Ascending aorta (tissue), 2 donors: ENCODE measurements at regions of chr3 and their contacts with region 1.

Region 1: DNA sequence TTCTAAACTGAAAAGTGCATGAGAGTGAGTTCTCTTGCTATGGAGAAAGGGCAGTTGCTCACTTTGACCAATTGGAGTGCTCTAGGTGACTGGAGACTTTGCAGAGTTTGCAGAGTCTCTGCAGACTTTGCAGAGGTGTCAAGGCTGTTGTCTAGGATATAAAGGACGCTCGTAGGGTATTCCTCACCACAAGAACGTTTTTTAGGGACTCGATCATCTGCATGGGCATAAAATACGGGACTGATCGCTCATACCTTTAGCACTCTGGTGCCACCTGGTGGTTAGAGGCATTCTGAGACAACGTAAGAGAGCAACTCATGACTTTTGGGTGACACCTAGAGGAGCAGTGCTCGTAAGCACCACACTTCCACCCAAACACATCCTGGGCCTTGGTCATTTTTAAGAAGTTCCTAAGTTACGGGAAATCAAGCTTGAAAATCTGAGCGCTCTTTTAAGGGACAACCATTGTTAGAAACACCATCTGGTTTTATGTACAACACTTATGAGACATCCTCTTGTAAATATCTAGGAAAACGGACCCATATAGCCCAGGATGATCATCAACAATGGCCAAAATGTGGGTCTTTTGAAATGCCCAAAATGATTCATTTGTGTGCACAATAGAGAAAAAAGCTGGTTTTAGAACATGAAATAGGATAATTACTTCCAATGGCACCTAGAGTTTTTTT is 51.6 kb upstream of the XCR1 start:
- DNase-seq: peak; percentile 53 to 97
- H3K4me3 ChIP-seq: peak overlapping the region in 1 of 2 donors; percentile 45
- H3K27ac ChIP-seq: no peak overlapping the region
- H3K4me1 ChIP-seq: no peaks in the 10 kb centered on the region
- H3K27me3 ChIP-seq: no peaks in the 10 kb centered on the region
- CTCF ChIP-seq: peak; percentile 96 to 99 (median 97)

Region 2: DNA sequence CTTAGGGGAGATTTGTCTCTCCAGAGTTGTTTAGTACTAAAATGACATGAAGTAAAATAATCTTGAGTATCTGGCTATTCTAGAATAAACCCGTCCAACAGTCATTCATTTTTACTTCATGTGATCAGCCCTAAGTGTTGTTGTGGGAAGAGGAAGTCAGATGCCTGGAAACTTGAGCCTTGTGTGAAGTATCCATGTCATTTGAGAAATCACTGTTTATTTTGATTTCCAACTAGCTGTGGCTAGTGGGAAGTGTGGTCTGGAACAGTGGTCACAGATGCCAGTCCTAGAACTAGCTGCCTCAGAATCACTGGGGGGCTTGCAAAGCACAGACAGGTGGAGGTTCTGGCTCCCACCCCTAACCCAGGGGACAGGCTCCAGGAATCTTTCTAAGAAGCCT is 562.0 kb before region 1 on chr3:
- intact Hi-C with region 1: loop called (anchors 10 kb)
- DNase-seq: no peak
- H3K4me3 ChIP-seq: no peak overlapping the region
- H3K27ac ChIP-seq: no peak overlapping the region
- H3K4me1 ChIP-seq: no peaks in the 10 kb centered on the region
- H3K27me3 ChIP-seq: no peaks in the 10 kb centered on the region
- CTCF ChIP-seq: no peak

Region 3: DNA sequence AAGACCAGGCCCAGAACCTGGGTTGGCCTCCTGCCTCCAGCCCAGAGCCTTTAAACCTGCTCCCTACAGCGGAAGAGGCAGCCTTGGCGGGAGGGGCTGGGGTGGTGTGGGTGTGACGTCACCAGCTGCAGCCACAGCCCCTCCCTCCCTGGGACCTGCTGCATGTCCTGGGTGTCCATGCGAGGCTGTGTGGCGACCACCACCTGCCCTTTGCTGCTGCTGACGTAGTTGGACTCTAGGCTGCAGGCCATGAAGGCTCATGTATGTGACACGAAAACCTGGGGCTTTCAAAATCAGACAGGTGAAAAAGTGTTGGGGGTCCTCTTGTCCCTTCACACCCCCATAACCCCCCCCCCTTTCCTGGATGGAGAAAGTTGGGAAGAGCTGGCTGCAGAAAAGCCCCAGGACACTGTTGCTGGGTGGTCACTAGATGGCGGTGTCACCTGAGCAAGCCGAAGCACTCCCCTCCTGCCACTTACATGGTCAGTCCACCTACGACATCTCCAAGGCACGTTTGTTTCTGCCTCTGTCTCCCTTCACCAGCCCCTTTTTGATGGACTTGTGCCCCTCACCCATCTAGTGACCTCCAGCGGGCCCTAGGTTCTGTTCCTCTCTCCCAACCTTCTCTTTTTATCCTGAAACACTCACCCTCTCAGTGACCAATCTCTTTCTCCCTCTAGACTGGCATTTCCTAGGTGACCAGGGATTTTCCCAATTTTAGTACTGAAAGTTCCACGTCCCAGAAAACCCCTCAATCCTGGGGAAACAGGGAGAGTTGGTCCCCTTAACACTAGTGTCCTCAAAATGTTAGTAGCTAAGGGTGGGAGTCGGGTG is 317.8 kb before region 1 on chr3:
- intact Hi-C with region 1: loop called (anchors 5 kb)
- DNase-seq: peak in 1 of 2 donors; percentile 63
- H3K4me3 ChIP-seq: no peak overlapping the region
- H3K27ac ChIP-seq: no peak overlapping the region
- H3K4me1 ChIP-seq: no peaks in the 10 kb centered on the region
- H3K27me3 ChIP-seq: no peaks in the 10 kb centered on the region
- CTCF ChIP-seq: peak; percentile 46 to 63 (median 51)

Region 4: DNA sequence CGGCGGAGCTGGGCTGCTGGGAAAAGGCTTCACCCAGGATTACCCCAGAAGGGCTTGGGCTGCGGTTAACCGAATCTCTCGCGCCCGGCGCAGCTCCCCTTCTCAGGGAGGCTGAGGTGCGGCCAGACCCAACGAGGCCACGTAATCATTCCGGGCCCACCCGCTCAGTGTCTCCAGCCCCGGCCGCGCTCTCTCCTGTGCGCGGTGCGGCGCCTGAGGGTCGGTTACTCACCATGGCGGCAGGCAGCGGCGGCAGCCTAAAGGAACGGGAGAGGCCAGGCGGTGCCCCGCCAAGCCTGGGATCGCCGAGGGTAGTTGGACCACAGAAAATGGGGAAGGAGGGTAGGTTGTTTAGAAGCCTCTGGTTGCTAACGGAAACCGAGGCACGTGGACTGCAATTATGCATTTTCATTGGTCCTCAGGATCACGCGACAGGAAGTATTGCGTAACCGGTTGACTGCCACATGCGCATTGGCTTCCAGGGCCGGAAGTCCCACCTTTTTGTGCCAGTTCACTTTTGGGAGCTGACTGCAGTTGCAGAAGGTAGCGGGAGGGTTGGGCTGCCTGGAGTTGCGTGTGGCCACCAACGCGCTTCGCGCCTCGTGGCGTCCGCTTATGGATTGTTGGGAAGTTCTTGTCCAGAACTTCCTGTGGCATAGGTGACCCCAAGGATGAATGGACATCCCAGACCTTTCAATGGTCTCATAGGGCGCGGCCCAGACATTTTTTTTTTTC is 236.9 kb before region 1 on chr3 and contains the start of gene LZTFL1:
- intact Hi-C with region 1: loop called (anchors 5 kb)
- DNase-seq: peak; percentile 78 to 96
- H3K4me3 ChIP-seq: peak within 1 kb of the TSS; percentile 72 to 79
- H3K27ac ChIP-seq: peak within 1 kb of the TSS in 1 of 2 donors; percentile 16
- H3K4me1 ChIP-seq: no peaks in the 10 kb centered on the region
- H3K27me3 ChIP-seq: no peaks in the 10 kb centered on the region
- CTCF ChIP-seq: no peak
- total RNA-seq, gene LZTFL1: 6.7 TPM

Region 5: GRCh38 chr3:45938864-45939263 is 140.0 kb before region 1 on chr3:
- intact Hi-C with region 1: loop called (anchors 1 kb)
- DNase-seq: peak; percentile 51 to 93
- H3K4me3 ChIP-seq: no peak overlapping the region
- H3K27ac ChIP-seq: no peak overlapping the region
- H3K4me1 ChIP-seq: peaks cover 0 to 3% of the 10 kb centered on the region in 2 donors
- H3K27me3 ChIP-seq: no peaks in the 10 kb centered on the region
- CTCF ChIP-seq: peak; percentile 77 to 89 (median 83)

Region 6: DNA sequence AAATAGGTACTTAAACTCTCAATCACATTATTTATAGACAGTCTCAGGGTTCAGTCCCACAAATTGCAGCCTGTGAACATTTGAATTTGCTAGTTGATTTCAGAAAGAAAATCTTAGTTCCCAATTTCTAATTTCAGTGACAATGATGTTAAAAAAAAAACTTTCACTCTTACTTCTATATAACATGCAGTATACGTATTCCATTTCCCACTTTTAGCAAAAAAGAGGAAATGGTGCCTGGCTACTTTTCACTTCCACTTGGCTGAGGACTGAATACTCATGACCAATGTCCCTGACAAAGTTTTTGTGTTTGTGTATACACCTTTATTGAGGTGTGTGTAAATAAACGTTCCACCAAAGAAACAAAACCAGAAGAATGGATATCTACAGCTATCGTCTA is 19.4 kb before region 1 on chr3:
- intact Hi-C with region 1: loop called (anchors 2 kb)
- DNase-seq: no peak
- H3K4me3 ChIP-seq: no peak overlapping the region
- H3K27ac ChIP-seq: no peak overlapping the region
- H3K4me1 ChIP-seq: peaks cover 3 to 24% of the 10 kb centered on the region in 2 donors
- H3K27me3 ChIP-seq: no peaks in the 10 kb centered on the region
- CTCF ChIP-seq: no peak

Region 7: GRCh38 chr3:46143951-46144473 is 65.2 kb after region 1 on chr3:
- intact Hi-C with region 1: no loop called
- DNase-seq: no peak
- H3K4me3 ChIP-seq: no peak overlapping the region
- H3K27ac ChIP-seq: no peak overlapping the region
- H3K4me1 ChIP-seq: no peaks in the 10 kb centered on the region
- H3K27me3 ChIP-seq: no peaks in the 10 kb centered on the region
- CTCF ChIP-seq: no peak

Region 8: GRCh38 chr3:46186471-46187340 is 107.8 kb after region 1 on chr3:
- intact Hi-C with region 1: no loop called
- DNase-seq: no peak
- H3K4me3 ChIP-seq: no peak overlapping the region
- H3K27ac ChIP-seq: no peak overlapping the region
- H3K4me1 ChIP-seq: no peaks in the 10 kb centered on the region
- H3K27me3 ChIP-seq: no peaks in the 10 kb centered on the region
- CTCF ChIP-seq: no peak

Region 9: DNA sequence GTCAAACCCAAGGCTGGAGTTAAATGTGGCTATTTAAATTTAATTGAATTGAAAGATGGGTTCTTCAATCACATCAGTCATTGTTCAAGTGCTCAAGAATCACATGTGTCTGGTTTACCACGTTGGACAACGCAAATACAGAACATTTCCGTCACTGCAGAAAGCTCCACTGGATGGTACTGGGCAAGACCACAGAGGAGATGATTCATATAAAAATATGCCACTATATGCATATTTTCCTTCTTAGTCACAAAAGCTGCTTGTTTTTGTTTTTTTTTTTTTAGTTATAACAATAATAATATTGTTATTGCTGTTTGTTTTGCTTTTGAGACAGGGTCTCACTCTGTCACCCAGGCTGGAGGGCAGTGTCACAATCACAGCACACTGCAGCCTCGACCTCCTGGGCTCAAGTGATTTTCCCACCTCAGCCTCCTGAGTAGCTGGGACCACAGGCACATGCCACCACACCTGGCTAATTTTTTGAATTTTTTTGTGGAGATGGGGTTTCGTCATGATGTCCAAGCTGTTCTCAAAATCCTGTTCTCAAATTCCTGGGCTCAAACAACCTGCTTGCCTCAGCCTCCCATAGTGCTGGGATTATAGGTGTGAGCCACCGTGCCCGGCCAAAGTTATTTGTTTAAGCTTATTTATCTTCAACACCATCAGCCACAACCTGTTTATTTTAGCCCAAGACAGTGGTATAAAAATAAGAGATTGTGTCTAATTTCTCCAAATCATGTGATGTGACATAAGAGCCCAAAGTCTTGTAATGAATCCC is 438.3 kb after region 1 on chr3:
- intact Hi-C with region 1: no loop called
- DNase-seq: no peak
- H3K4me3 ChIP-seq: no peak overlapping the region
- H3K27ac ChIP-seq: no peak overlapping the region
- H3K4me1 ChIP-seq: no peaks in the 10 kb centered on the region
- H3K27me3 ChIP-seq: no peaks in the 10 kb centered on the region
- CTCF ChIP-seq: no peak